ENCODE measurements at regions of chr7 and their contacts with region 1.

Region 1: DNA sequence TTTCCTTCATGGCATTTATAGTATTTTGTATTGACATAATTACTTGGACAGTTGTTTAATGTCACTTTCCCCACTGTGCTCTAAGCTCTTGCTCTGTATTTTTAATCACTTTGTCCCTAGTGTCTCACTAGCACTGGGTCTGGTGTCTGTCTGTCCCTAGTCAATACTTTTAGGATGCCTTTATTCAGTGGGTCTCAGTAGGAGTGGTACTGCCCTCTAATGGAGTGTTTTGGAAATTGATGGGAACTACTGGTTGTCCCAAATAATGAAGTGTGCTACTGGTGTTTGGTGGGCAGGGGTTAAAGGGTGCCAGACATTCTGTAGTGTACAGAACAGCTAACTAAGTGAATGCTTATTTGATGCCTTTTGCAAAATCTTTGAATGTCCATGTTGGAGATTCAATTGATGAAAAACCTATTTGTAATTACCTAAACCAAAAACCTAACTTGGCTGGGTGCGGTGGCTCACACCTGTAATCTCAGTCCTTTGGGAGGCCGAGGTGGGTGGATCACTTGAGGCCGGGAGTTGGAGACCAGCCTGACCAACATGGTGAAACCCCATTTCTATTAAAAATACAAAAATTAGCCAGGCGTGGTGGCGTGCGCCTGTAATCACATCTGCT is 33.3 kb downstream of the CDK14 start:
- DNase-seq: no peak
- H3K4me3 ChIP-seq: no peak overlapping the region
- H3K27ac ChIP-seq: no peak overlapping the region
- H3K4me1 ChIP-seq: peaks cover 14 to 18% (median 17%) of the 10 kb centered on the region in 4 donors
- H3K27me3 ChIP-seq: no peaks in the 10 kb centered on the region
- CTCF ChIP-seq: peak; percentile 53 to 69 (median 55)
- EP300 ChIP-seq: no peak
- POLR2A ChIP-seq: no peak

Region 2: DNA sequence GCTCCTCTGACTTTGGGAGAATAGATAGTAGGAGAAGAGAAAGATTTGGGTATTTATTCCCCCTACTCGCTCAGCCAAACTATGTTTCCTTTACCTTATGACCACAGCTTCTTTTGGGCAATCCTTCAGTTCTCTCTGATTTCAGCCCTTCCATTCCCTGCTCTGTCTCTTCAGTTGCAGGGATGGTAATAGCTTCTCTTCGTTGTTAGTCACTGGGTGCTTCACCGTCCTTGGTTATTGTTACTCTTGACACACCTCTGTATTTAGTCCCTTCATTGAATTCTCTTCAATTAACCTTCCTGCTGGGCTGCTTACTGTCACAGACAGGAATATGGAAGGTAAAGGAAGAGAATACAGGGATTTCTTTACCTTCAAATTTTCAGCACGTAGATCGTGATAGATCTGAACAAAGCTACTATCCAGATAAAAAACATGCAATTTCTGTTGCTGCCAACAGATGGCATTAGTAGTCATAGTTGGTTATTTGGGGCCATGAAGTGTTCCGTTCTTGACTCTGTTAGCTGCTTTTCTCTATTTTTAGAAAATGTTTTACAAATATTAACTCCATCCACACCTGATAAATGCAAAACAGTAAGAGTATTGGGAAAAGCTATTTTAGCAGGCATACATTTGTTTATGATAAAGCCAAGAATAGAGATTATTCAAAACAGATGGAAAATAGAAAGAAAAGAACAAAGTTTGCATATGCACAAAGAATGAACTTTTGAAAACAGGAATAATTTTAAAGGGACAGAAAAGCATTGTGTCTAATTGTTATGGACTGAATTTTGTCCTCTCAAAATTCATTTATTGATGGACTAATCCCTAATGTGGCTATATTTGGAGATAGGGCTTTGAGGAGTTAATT is 174.0 kb before region 1 on chr7:
- intact Hi-C with region 1: loop called (anchors 10 kb)
- DNase-seq: no peak
- H3K4me3 ChIP-seq: peak overlapping the region in 3 of 4 donors; percentile 19 to 26 (median 25)
- H3K27ac ChIP-seq: no peak overlapping the region
- H3K4me1 ChIP-seq: peaks cover 0 to 9% (median 4%) of the 10 kb centered on the region in 4 donors
- H3K27me3 ChIP-seq: no peaks in the 10 kb centered on the region
- CTCF ChIP-seq: peak; percentile 60 to 65 (median 64)
- EP300 ChIP-seq: no peak
- POLR2A ChIP-seq: no peak

Region 3: GRCh38 chr7:90552521-90552920 is 76.9 kb before region 1 on chr7:
- intact Hi-C with region 1: loop called (anchors 5 kb)
- DNase-seq: no peak
- H3K4me3 ChIP-seq: no peak overlapping the region
- H3K27ac ChIP-seq: no peak overlapping the region
- H3K4me1 ChIP-seq: no peaks in the 10 kb centered on the region
- H3K27me3 ChIP-seq: no peaks in the 10 kb centered on the region
- CTCF ChIP-seq: peak; percentile 12 to 33 (median 27)
- EP300 ChIP-seq: no peak
- POLR2A ChIP-seq: no peak